Panc1 (cell line): ENCODE measurements at regions of chr15 and their contacts with region 1.

Region 1: GRCh38 chr15:90851114-90851513 is 17.3 kb upstream of the FURIN start:
- DNase-seq: no peak
- ATAC-seq: no peak
- H3K4me3 ChIP-seq: no peak overlapping the region
- H3K27ac ChIP-seq: no peak overlapping the region
- H3K4me1 ChIP-seq: no peaks in the 10 kb centered on the region
- H3K27me3 ChIP-seq: no peaks in the 10 kb centered on the region
- CTCF ChIP-seq: no peak

Region 2: DNA sequence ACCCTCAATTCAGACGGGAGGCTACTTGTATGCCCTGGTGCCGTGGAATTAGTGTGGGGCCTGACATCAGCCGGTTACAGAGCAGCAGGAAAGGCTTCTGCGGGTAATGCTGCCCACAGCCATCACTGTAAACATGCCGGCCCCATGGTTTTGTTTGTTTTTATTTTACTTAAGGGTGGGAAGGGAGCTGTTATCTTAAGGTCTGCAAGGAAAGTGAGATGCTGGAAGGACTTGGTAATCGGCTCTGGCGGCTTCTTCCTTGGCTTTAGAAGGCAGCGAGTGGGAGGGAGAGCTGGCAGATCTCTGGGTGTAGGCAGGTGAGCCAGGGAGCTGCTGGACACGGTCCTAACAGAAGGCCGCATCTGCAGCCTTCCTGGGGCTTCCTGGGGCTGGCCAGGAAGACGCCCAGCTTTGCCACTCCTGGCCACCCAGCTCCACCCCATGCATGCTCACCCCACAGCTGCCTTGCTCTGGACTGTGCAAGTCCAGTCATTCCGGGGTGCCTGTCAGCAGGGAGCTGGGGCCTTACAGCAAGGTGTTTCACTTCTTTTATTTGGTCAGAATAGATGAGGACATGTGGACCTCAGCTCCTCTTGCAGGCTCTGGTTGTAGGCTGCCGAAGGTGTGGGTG is 36.8 kb before region 1 on chr15:
- CTCF ChIA-PET with region 1: no interaction called
- POLR2A ChIA-PET with region 1: interaction called, 19 read pairs
- in situ Hi-C with region 1: no loop called
- intact Hi-C with region 1: no loop called
- DNase-seq: no peak
- ATAC-seq: 0 out of 2 replicates have a peak, but pooled peaks have one; percentile 11
- H3K4me3 ChIP-seq: no peak overlapping the region
- H3K27ac ChIP-seq: no peak overlapping the region
- H3K4me1 ChIP-seq: no peaks in the 10 kb centered on the region
- H3K27me3 ChIP-seq: no peaks in the 10 kb centered on the region
- CTCF ChIP-seq: no peak